CD4-positive, alpha-beta T cell (primary cell): ENCODE measurements at regions of chr15 and their contacts with region 1.

Region 1: GRCh38 chr15:50003786-50004334 is 115.2 kb downstream of the ATP8B4 start:
- DNase-seq: peak; percentile 11 to 74 (median 33)
- ATAC-seq: peak; percentile 57
- H3K4me3 ChIP-seq: no peak overlapping the region
- H3K4me3 Mint-ChIP-seq: no peak overlapping the region
- H3K27ac ChIP-seq: no peak overlapping the region
- H3K27ac Mint-ChIP-seq: peak overlapping the region; percentile 15
- H3K4me1 ChIP-seq: no peaks in the 10 kb centered on the region
- H3K4me1 Mint-ChIP-seq: peaks cover 7% of the 10 kb centered on the region
- H3K27me3 ChIP-seq: no peaks in the 10 kb centered on the region
- H3K27me3 Mint-ChIP-seq: peaks cover 10% of the 10 kb centered on the region
- CTCF ChIP-seq: peak; percentile 18

Region 2: DNA sequence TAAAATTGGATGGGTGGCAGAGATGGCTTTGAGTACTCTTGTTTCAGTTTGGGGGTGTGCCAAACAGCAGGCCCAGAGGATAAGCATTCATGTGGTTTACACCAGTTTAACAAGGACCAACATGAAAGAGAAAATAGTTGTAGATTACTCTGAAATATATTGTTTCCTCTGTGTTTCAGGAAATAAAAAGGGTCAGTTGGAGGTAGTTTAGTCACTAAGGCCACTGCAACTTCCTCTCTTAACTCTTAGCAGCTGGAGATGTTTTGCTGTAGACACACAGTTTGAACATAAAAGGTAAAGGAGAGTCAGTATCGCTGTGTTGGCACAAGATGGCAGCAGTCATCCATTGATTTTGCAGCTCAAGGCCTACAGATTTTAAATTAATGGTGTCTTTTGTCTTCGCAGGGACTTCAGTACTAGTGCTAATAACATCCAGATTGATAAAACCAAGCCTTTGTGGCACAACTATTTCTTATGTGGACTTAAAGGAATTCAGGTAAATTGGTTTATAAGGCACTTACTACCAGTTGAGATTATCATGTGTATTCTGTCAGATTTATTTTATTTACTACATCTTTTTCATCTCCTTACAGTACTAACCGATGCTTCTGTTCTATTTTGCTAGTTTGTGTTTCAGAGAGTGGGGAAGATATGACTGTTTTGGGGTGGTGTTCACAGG is 768.3 kb before region 1 on chr15:
- CTCF ChIA-PET with region 1: no interaction called
- POLR2A ChIA-PET with region 1: no interaction called
- intact Hi-C with region 1: loop called in 1 of 2 experiments (anchors 10 kb)
- DNase-seq: peak; percentile 7 to 70 (median 25)
- ATAC-seq: peak; percentile 59
- H3K4me3 ChIP-seq: no peak overlapping the region
- H3K4me3 Mint-ChIP-seq: no peak overlapping the region
- H3K27ac ChIP-seq: no peak overlapping the region
- H3K27ac Mint-ChIP-seq: peak overlapping the region; percentile 3
- H3K4me1 ChIP-seq: no peaks in the 10 kb centered on the region
- H3K4me1 Mint-ChIP-seq: peaks cover 14% of the 10 kb centered on the region
- H3K27me3 ChIP-seq: no peaks in the 10 kb centered on the region
- H3K27me3 Mint-ChIP-seq: no peaks in the 10 kb centered on the region
- CTCF ChIP-seq: peak; percentile 52

Region 3: DNA sequence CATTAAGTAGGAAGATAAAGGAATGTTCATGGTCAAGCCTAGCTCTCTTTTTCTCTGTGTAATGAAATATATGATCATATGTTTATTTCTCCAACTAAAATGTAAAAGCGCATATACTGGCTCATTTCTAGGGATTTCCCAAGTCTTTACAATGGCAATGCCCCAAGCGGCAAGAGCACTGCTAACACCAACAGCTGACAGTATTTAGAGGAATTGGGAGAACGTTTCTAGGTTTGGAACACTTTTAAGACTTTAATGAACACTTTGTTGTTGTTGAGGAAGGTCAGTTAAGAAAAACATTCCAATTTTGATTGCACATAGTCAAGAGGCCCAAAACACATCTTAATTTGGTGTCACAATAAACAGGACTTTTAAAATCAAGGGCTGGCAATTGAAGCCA is 17.5 kb before region 1 on chr15:
- CTCF ChIA-PET with region 1: no interaction called
- POLR2A ChIA-PET with region 1: no interaction called
- intact Hi-C with region 1: loop called in 1 of 2 experiments (anchors 1 kb)
- DNase-seq: no peak
- ATAC-seq: no peak
- H3K4me3 ChIP-seq: no peak overlapping the region
- H3K4me3 Mint-ChIP-seq: no peak overlapping the region
- H3K27ac ChIP-seq: no peak overlapping the region
- H3K27ac Mint-ChIP-seq: no peak overlapping the region
- H3K4me1 ChIP-seq: no peaks in the 10 kb centered on the region
- H3K4me1 Mint-ChIP-seq: no peaks in the 10 kb centered on the region
- H3K27me3 ChIP-seq: no peaks in the 10 kb centered on the region
- H3K27me3 Mint-ChIP-seq: no peaks in the 10 kb centered on the region
- CTCF ChIP-seq: no peak